Body of pancreas (tissue), 4 donors: ENCODE measurements at regions of chr2 and their contacts with region 1.

Region 1: DNA sequence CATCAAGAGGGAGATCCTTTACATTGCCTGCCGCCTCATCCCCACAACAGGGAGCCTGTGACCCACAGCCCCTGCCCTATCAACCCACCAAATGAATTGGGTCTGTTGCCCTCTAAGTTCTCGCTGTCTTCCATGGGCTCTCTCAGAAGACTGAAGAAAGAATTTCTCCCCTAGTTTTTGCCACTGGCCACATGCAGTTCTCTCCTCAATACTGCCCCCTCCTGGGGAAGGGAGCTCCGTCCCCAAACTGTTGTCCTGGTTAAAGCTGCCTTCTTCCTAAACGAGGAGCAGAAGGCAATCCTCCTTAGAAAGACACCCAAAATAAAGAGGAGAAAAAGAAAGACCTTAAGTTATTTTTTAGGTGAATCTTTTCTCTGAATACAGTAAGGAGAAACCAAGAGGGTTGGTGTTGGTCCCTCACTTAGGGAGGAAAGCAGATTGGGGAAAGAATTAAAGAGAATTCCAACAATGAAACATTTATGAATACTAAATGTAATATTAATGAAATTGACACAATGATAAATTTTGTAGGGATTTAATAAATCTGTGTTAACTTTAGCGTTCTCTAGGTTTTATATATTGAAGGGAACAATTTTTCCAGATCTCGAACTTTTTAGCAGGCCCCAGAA is 31.1 kb upstream of the SATB2 start:
- DNase-seq: peak; percentile 52 to 71 (median 63)
- ATAC-seq: peak; percentile 55
- H3K4me3 ChIP-seq: no peak overlapping the region
- H3K27ac ChIP-seq: no peak overlapping the region
- H3K4me1 ChIP-seq: no peaks in the 10 kb centered on the region
- H3K27me3 ChIP-seq: no peaks in the 10 kb centered on the region
- CTCF ChIP-seq: peak; percentile 33 to 62 (median 54)
- POLR2A ChIP-seq: no peak

Region 2: GRCh38 chr2:198309673-198310280 is 1179.1 kb before region 1 on chr2:
- intact Hi-C with region 1: loop called (anchors 10 kb)
- DNase-seq: peak; percentile 28 to 54 (median 46)
- ATAC-seq: no peak
- H3K4me3 ChIP-seq: no peak overlapping the region
- H3K27ac ChIP-seq: no peak overlapping the region
- H3K4me1 ChIP-seq: no peaks in the 10 kb centered on the region
- H3K27me3 ChIP-seq: no peaks in the 10 kb centered on the region
- CTCF ChIP-seq: peak; percentile 62 to 83 (median 66)
- POLR2A ChIP-seq: no peak

Region 3: GRCh38 chr2:199552141-199552540 is 63.3 kb after region 1 on chr2:
- intact Hi-C with region 1: no loop called
- DNase-seq: no peak
- ATAC-seq: no peak
- H3K4me3 ChIP-seq: no peak overlapping the region
- H3K27ac ChIP-seq: no peak overlapping the region
- H3K4me1 ChIP-seq: no peaks in the 10 kb centered on the region
- H3K27me3 ChIP-seq: no peaks in the 10 kb centered on the region
- CTCF ChIP-seq: no peak
- POLR2A ChIP-seq: no peak